Heart right ventricle (tissue), 16 donors: ENCODE measurements at regions of chr2 and their contacts with region 1.

Region 1: GRCh38 chr2:67840460-67841068 is 222.2 kb downstream of the C1D start:
- DNase-seq: peak; percentile 63 to 66
- ATAC-seq: peak; percentile 91 to 98 (median 96)
- H3K4me3 ChIP-seq: no peak overlapping the region
- H3K27ac ChIP-seq: no peak overlapping the region
- H3K4me1 ChIP-seq: no peaks in the 10 kb centered on the region
- H3K27me3 ChIP-seq: no peaks in the 10 kb centered on the region
- CTCF ChIP-seq: peak; percentile 49 to 88 (median 76)

Region 2: DNA sequence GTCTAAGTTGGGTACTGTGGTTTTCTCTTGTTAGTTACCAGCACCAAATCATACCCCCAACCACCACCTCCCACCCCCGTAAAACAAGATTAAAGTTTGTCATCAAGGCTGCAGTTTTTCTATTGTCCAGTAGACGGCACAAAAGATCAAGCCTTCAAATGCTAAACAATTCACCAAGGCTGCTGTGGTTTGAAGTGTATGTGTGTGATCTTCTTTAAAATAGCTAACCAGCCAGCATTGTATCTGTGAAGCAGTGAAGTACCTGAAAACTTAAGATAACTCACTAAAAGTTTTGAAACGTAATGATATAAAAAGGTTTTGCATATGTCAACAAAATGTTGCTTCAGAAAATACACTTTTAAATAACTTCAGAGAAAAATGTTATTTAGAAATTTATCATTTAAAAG is 1411.5 kb before region 1 on chr2:
- intact Hi-C with region 1: loop called in 6 of 10 experiments (anchors 5 to 10 kb)
- DNase-seq: no peak
- ATAC-seq: no peak
- H3K4me3 ChIP-seq: no peak overlapping the region
- H3K27ac ChIP-seq: no peak overlapping the region
- H3K4me1 ChIP-seq: peaks cover 0 to 20% (median 12%) of the 10 kb centered on the region in 9 donors
- H3K27me3 ChIP-seq: peaks cover 0 to 99% (median 46%) of the 10 kb centered on the region in 7 donors
- CTCF ChIP-seq: peak; percentile 53 to 88 (median 78)

Region 3: DNA sequence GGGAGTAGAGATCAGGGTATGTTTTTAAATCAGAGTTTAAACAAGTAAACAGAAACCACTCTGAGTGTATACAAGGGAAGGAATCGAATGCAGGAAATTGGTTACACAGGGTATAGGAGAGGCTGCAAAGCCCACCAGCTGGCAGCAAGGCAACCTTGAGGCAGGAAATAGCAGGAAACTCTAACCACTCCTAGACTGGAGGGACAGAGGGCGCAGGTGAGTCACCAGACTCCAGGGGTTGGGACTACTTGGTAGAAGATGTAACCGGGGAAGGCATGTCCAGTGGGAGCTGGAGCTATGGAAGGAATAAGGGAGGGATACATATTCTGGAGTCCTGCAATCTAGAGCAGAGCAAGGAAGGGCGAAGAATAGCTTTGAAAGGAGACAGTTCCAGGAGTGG is 1253.3 kb before region 1 on chr2:
- intact Hi-C with region 1: loop called in 4 of 10 experiments (anchors 5 to 10 kb)
- DNase-seq: no peak
- ATAC-seq: peak in 1 of 8 donors; percentile 41
- H3K4me3 ChIP-seq: no peak overlapping the region
- H3K27ac ChIP-seq: no peak overlapping the region
- H3K4me1 ChIP-seq: peaks cover 0 to under 1% (median 0%) of the 10 kb centered on the region in 9 donors
- H3K27me3 ChIP-seq: peaks cover 0 to 69% (median 50%) of the 10 kb centered on the region in 7 donors
- CTCF ChIP-seq: peak in 3 of 9 donors; percentile 10 to 19 (median 15)

Region 4: DNA sequence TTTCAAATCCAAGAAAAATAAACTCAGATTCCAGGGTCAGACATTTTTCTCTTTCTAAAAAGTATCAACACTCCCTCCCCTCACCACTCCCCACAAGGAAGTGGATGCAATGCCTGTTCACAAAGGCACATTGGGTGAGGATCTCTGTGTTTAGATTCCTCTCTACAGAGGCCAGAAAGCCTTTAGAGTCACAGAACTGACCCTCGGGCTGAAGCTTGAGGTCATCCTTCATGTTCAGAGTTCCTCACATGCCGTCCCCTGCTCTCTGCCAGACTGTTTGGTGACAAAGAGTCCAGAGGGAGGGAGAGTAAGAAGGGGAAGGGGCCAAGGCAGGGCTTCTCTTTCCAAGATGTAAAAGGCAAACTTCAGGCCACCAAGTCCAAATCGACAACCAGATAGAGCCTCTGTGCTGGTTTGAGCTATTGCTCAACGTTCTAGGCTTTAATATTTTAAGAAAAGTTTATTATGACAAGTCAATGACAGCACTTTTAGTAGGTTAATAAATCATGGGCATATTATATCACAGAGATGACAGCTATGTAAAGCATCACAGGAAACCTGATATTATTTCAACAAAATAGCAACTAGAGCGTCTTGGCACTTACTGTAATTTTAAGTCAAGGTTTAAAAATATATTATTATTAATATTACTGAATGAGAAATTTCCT is 174.0 kb before region 1 on chr2:
- intact Hi-C with region 1: loop called in 3 of 10 experiments (anchors 10 kb)
- DNase-seq: peak in 1 of 2 donors; percentile 17
- ATAC-seq: peak in 7 of 8 donors; percentile 58 to 99 (median 85)
- H3K4me3 ChIP-seq: no peak overlapping the region
- H3K27ac ChIP-seq: peak overlapping the region in 8 of 10 donors; percentile 23 to 70 (median 52)
- H3K4me1 ChIP-seq: peaks cover 0 to 20% (median 16%) of the 10 kb centered on the region in 9 donors
- H3K27me3 ChIP-seq: no peaks in the 10 kb centered on the region
- CTCF ChIP-seq: no peak

Region 5: GRCh38 chr2:68031542-68032160 is 191.1 kb after region 1 on chr2:
- intact Hi-C with region 1: loop called in 1 of 10 experiments (anchors 10 kb)
- DNase-seq: no peak
- ATAC-seq: no peak
- H3K4me3 ChIP-seq: no peak overlapping the region
- H3K27ac ChIP-seq: no peak overlapping the region
- H3K4me1 ChIP-seq: peaks cover 0 to 3% (median 0%) of the 10 kb centered on the region in 9 donors
- H3K27me3 ChIP-seq: peaks cover 0 to 10% (median 0%) of the 10 kb centered on the region in 7 donors
- CTCF ChIP-seq: peak; percentile 48 to 81 (median 72)